Activated naive CD8-positive, alpha-beta T cell treated with anti-CD3 and anti-CD28 coated beads, Interleukin-2, amount 10 ng/mL, durations not matched to agents 7 days and 5 days (primary cell): ENCODE measurements at regions of chr1 and their contacts with region 1.

Region 1: GRCh38 chr1:212857992-212858460 is at the start of gene FLVCR1:
- DNase-seq: peak; percentile 95
- ATAC-seq: peak; percentile 99
- H3K4me3 Mint-ChIP-seq: peak within 1 kb of the TSS; percentile 94
- H3K27ac Mint-ChIP-seq: peak within 1 kb of the TSS; percentile 97
- H3K4me1 Mint-ChIP-seq: peaks cover 15% of the 10 kb centered on the region
- H3K27me3 Mint-ChIP-seq: no peaks in the 10 kb centered on the region
- total RNA-seq, gene FLVCR1: 10.6 to 12.9 TPM

Region 2: GRCh38 chr1:212689196-212689725 is 168.8 kb before region 1 on chr1:
- POLR2A ChIA-PET with region 1: no interaction called
- DNase-seq: no peak
- ATAC-seq: no peak
- H3K4me3 Mint-ChIP-seq: no peak overlapping the region
- H3K27ac Mint-ChIP-seq: no peak overlapping the region
- H3K4me1 Mint-ChIP-seq: peaks cover 28% of the 10 kb centered on the region
- H3K27me3 Mint-ChIP-seq: no peaks in the 10 kb centered on the region

Region 3: DNA sequence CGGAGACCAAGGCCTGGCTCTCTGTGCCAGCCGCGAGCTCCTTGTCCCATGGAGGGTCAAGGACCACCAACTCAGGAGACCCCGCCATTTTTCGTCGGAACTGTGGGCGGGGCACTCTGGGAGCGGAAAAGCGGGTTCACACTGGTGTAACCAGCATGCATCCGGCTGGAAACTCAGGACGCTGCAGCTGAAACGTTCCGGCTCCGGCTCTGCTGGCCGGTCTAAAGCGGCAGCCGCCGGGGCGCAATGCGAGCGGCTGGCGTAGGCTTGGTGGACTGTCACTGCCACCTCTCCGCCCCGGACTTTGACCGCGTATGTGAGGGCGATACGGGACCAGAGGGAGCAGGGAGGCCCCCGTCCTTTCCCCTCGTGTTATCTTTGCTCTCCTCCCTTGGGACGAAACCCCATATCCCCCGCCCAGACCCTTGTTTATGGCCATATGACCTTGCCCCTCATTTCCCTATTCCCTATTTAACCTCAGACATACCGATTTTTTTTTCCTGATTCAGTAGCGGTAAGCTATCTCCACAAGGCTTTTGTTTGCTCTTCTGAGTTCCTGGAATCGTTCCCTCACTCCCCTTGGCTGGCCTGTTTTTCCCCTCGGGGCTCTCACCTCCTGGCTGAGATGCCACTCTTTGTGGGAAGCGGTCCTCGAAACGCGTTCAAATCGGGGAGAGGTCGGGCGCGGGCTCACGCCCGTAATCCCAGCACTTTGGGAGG is 66.2 kb before region 1 on chr1 and contains the starts of genes NSL1 and TATDN3:
- POLR2A ChIA-PET with region 1: interaction called, 22 read pairs
- DNase-seq: peak; percentile 99
- ATAC-seq: peak; percentile 87
- H3K4me3 Mint-ChIP-seq: peak within 1 kb of the TSS; percentile 99
- H3K27ac Mint-ChIP-seq: peak within 1 kb of the TSS; percentile 97
- H3K4me1 Mint-ChIP-seq: peaks cover 27% of the 10 kb centered on the region
- H3K27me3 Mint-ChIP-seq: no peaks in the 10 kb centered on the region
- total RNA-seq, gene NSL1: 38.1 to 38.2 TPM
- total RNA-seq, gene TATDN3: 13.9 to 18.6 TPM

Region 4: DNA sequence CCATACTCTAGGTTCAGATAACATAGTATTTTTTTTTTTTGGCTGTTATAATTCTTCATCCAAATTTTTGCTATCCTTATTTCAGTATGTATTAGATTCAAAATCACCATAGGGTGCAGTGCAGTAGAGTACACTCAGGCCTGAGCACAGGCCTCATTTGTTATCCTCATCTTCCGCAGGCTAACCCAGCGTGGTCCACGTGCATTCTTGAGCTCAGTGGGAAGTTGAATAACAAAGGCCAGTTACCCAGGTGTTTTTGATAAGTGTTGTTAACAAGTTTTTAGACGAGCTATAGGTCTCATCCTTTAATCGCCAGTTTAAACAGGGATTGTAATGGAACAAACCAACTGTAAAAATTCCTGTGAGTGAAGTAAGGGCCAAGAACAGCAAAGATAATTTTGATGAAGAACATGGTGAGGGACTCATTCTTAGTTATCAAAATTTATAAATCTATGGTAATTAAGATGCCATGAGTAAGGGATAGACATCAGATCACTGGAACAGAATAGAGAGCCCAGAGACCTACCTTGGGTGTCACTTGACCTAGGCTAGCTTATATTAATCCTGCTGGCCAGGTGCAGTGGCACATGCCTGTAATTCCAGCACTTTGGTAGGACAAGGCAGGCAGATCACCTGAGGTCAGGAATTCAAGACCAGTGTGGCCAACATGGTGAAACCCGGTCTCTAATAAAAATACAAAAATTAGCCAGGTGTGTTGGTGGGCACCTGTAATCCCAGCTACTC is 22.1 kb after region 1 on chr1:
- POLR2A ChIA-PET with region 1: no interaction called
- DNase-seq: no peak
- ATAC-seq: no peak
- H3K4me3 Mint-ChIP-seq: no peak overlapping the region
- H3K27ac Mint-ChIP-seq: no peak overlapping the region
- H3K4me1 Mint-ChIP-seq: peaks cover 2% of the 10 kb centered on the region
- H3K27me3 Mint-ChIP-seq: no peaks in the 10 kb centered on the region

Region 5: DNA sequence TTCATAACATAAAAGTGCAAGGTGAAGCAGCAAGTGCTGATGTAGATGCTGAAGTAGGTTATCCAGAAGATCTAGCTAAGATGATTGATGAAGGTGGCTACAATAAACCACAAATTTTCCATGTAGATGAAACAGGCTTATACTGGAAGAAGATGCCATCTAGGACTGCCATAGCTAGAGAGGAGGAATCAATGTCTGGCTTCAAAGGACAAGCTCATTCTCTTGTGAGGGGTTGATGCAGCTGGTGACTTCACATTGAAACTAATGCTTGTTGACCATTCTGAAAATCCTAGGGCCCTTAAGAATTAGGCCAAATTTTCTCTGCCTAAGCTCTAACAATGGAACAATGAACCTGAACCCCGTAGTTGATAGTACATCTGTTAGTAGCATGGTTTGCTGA is 34.1 kb after region 1 on chr1:
- POLR2A ChIA-PET with region 1: no interaction called
- DNase-seq: no peak
- ATAC-seq: no peak
- H3K4me3 Mint-ChIP-seq: no peak overlapping the region
- H3K27ac Mint-ChIP-seq: no peak overlapping the region
- H3K4me1 Mint-ChIP-seq: peaks cover 6% of the 10 kb centered on the region
- H3K27me3 Mint-ChIP-seq: no peaks in the 10 kb centered on the region

Region 6: GRCh38 chr1:212909652-212910063 is 51.6 kb after region 1 on chr1:
- POLR2A ChIA-PET with region 1: no interaction called
- DNase-seq: no peak
- ATAC-seq: no peak
- H3K4me3 Mint-ChIP-seq: no peak overlapping the region
- H3K27ac Mint-ChIP-seq: no peak overlapping the region
- H3K4me1 Mint-ChIP-seq: no peaks in the 10 kb centered on the region
- H3K27me3 Mint-ChIP-seq: peaks cover 14% of the 10 kb centered on the region

Region 7: DNA sequence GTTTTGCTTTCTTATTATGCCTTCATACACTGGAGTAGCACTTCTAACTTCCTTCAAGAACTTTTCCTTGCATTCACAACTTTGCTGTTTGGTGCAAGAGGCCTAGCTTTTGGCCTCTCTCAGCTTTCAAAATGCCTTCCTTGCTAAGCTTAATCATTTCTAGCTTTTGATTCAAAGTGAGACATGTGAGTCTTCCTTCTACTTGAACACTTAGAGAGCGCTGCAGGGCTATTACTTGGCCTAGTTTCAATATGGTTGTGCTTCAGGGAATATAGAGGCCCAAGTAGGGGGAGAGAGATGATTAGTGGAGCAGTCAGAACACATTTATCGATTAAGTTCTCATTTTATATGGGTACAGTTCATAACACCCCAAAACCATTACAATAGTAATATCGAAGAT is 145.2 kb after region 1 on chr1:
- POLR2A ChIA-PET with region 1: interaction called, 10 read pairs
- DNase-seq: no peak
- ATAC-seq: no peak
- H3K4me3 Mint-ChIP-seq: no peak overlapping the region
- H3K27ac Mint-ChIP-seq: no peak overlapping the region
- H3K4me1 Mint-ChIP-seq: peaks cover 5% of the 10 kb centered on the region
- H3K27me3 Mint-ChIP-seq: no peaks in the 10 kb centered on the region